ENCODE measurements at regions of chr7 and their contacts with region 1.

Region 1: DNA sequence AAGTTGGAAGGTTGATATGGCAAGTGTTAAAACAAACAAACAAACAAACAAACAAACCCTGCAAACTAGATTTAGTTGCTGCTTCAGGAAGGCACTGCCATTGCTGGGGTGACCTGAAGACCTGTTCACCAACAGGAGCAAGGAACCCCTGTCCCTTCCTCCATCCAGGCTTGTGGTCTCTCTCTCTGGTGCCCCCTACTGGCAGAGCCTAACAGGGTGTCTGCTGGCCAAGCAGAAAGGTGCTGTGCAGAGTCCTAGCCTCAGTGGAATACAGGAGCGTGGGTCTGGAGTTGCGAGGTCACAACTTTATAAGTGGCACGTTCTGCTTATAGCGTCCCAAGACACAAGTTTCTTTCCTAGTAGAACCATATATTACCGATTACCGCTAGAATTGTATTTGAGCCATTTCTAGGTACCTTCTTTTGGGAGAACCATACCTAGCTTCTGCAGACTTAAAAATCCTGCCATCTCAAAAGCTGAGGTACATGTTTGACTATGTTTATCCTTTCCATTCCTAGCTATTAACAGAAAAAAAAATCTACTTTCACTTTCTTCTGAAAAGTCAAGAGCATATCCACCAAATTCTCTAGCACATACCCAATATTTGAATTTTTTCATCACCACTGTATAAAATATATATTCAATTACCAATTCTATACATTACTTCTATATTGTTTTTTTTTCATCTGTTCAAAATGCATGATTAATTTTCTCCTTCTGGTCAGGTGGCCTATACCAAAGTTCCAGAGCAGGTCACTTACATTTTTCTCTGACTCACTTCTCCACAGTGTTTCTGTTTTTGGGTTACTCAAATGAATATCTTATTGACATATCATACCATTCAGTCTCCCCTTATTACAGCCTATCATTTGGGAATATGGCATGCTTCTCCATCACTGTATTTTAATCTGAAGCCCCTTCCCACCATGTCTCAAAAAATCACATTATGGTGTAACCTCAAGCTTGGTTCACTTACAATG is 29.1 kb upstream of the CALD1 start:
- DNase-seq: peak; percentile 71
- ATAC-seq: peak; percentile 87
- H3K4me3 Mint-ChIP-seq: no peak overlapping the region
- H3K27ac Mint-ChIP-seq: no peak overlapping the region
- H3K4me1 Mint-ChIP-seq: no peaks in the 10 kb centered on the region
- H3K27me3 Mint-ChIP-seq: peaks cover 3% of the 10 kb centered on the region

Region 2: DNA sequence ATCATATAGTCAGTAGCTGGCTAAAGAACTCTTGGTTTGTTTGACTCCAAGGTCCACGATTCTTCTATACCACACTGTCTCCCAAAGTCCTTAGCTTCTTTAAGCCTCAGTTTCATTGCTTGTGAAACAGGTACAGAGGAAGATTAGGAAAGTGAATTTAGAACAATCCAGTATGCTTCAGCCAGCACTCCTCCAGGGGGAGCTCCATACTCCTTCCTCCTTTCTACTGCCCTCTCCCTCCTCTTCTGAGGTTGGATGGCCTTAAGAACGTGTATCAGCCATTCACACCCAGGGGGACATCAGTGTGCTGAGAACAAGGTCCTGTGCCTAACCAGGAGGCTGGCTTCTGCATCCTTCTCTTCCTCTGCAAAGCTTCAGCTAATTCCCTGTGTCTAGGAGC is 25.8 kb before region 1 on chr7:
- CTCF ChIA-PET with region 1: interaction called, 13 read pairs
- POLR2A ChIA-PET with region 1: no interaction called
- DNase-seq: no peak
- ATAC-seq: peak; percentile 44
- H3K4me3 Mint-ChIP-seq: no peak overlapping the region
- H3K27ac Mint-ChIP-seq: no peak overlapping the region
- H3K4me1 Mint-ChIP-seq: no peaks in the 10 kb centered on the region
- H3K27me3 Mint-ChIP-seq: no peaks in the 10 kb centered on the region